HEK293T (cell line): ENCODE measurements at regions of chr3 and their contacts with region 1.

Region 1: DNA sequence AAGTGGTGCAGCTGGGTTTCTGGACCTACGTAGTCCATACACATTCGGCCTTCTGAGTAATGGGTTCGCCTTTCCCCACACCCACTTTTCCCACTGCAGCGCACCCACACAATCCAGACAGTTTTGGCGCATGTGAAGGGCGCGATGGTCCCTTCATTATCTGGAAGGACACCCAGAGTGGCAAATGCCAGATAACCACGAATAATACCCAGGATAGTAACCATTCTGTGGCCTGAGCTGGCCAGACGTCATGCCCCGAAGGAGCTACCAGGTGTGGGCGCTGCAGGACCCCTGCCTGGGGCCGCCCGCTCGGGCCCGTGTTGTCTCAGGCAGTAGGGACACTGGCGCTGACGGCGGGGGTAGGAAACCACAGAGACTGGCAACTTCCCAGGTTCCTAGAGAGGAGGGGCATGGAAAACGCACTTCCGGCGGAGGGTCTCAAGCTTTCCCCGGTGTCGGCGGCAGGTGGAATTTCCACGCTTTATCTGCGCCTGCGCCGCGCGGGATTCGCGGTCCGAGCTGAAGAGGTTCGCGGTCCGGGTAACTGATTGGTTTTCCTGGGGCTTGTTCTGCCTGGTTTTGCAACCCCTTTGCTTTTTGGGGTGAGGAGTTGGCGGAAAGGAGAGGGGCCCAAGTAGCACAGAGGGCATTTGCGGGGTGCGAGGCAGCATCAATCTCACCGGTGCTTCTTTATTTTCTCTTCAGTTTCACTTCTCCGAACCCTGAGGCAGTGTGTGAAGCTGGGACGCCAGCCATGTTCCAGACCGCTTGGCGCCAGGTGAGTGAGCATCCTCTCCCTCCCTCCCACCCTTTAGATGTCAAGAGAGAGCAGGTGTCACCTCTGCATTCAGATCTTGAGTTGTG is at the start of gene ZNF620:
- DNase-seq: peak; percentile 86

Region 2: GRCh38 chr3:40452876-40453730 is 52.7 kb before region 1 on chr3:
- CTCF ChIA-PET with region 1: no interaction called
- POLR2A ChIA-PET with region 1: interaction called, 17 read pairs
- DNase-seq: peak; percentile 94

Region 3: GRCh38 chr3:40476478-40477470 is 29.1 kb before region 1 on chr3 and contains the start of gene ZNF619:
- CTCF ChIA-PET with region 1: no interaction called
- POLR2A ChIA-PET with region 1: interaction called, 32 read pairs
- DNase-seq: peak; percentile 50

Region 4: DNA sequence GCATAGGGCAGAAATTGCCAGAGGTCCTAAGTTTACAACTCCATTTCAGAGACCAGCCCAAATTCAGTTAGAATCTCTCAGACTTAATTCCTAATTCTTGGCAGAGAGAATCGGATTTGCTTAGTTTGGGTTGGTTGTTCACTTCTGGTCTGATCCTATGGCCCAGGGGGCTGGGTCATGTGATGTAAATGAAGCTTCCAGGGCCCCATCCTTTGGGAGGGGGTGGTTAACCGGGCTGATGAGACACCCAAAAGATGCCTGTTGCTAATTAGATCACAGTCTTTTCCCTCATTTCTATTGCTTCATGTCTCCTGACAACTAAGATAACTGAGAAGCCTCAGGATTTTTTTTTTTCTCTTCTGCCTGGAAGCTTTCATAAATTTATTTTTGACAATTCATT is 11.1 kb before region 1 on chr3:
- CTCF ChIA-PET with region 1: no interaction called
- POLR2A ChIA-PET with region 1: interaction called, 15 read pairs
- DNase-seq: no peak

Region 5: DNA sequence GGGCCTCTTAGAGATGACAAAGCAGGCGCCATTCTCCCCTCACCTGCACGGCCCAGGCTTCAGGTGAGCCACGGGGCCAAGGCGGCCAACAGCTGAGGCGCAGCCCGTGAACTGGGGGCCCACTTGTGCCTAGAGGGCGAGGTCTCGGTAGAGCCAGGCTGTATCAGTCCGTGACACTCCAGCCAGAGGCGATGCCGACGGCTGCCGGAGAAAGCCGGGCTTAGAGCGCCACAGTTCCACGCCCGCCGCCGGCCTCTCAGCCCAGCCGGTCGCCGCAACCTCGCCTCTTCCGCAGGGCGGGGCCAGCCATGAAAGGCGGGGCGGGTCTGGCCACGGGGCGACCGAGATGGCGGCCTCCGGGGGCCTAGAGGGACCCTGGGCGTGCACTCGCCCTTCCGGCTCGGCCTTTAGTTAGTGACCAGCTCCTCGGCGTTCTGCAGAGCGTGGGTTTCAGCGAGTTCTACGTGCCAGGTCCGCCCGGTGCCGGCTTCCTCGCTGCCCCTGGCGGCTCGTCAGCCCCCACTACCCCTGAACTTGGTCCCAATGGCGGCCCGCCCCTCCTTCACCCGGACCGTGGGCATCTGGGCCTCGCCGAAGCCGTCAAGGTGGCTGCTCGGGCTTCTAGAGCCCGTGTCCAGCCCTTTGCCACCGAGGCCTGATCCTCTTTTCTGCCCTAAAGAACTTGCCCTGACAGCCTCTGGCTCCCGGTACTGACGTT is 18.9 kb after region 1 on chr3 and contains the start of gene ZNF621:
- CTCF ChIA-PET with region 1: interaction called, 4 read pairs
- POLR2A ChIA-PET with region 1: interaction called, 36 read pairs
- DNase-seq: peak; percentile 92